Right lobe of liver (tissue), 6 donors: ENCODE measurements at regions of chr5 and their contacts with region 1.

Region 1: DNA sequence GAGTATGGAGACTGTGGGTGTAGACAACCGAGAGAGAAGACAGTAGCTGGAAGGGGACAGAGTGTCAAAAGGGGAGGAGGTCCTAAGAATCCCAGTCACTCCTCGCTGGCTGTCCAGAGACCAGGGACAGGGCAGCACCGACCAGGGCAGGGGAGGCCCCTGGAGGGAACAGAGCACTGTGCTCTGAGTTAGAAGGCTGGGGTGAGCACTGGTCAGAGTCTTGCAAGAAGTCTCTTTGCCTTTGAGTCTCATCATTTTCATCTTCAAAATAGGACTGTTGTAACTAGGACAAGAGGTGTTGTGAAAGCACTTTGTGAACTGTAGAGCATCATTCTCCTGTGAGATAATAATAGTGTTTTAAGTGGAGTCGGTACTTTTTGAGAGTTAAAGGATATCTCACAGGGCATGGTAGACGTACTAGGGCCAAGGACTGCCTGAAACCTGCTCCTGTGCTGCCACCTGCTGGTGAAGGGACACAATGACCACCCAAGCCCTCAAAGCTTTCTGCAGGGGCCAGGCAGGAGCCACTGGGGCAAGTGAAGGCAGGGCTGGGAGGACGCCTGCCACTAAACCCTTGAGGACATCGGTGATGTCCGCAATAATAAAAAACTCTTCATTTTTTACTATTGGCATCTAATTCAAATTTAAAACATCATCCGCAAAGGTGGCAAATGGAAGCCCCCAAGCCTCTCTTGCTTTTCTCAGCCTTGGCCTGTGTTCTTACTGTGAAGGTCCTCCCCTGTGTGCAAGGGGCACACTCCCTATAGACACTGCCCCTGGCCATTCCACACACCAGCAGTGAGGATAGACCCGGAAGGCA is 28.2 kb downstream of the SLC6A7 start:
- DNase-seq: peak; percentile 82 to 86 (median 83)
- ATAC-seq: peak; percentile 91 to 99 (median 98)
- H3K4me3 ChIP-seq: no peak overlapping the region
- H3K27ac ChIP-seq: no peak overlapping the region
- H3K4me1 ChIP-seq: no peaks in the 10 kb centered on the region
- H3K27me3 ChIP-seq: no peaks in the 10 kb centered on the region
- CTCF ChIP-seq: peak; percentile 87 to 94 (median 92)
- POLR2A ChIP-seq: no peak

Region 2: GRCh38 chr5:150129813-150130492 is 88.1 kb before region 1 on chr5:
- intact Hi-C with region 1: loop called in 1 of 2 experiments (anchors 10 kb)
- DNase-seq: peak; percentile 76 to 87 (median 86)
- ATAC-seq: peak; percentile 94 to 95 (median 94)
- H3K4me3 ChIP-seq: peak overlapping the region in 2 of 3 donors; percentile 33 to 37
- H3K27ac ChIP-seq: peak overlapping the region in 2 of 3 donors; percentile 41 to 57
- H3K4me1 ChIP-seq: peaks cover 0 to 17% (median 6%) of the 10 kb centered on the region in 4 donors
- H3K27me3 ChIP-seq: no peaks in the 10 kb centered on the region
- CTCF ChIP-seq: peak; percentile 91 to 99 (median 98)
- POLR2A ChIP-seq: no peak

Region 3: DNA sequence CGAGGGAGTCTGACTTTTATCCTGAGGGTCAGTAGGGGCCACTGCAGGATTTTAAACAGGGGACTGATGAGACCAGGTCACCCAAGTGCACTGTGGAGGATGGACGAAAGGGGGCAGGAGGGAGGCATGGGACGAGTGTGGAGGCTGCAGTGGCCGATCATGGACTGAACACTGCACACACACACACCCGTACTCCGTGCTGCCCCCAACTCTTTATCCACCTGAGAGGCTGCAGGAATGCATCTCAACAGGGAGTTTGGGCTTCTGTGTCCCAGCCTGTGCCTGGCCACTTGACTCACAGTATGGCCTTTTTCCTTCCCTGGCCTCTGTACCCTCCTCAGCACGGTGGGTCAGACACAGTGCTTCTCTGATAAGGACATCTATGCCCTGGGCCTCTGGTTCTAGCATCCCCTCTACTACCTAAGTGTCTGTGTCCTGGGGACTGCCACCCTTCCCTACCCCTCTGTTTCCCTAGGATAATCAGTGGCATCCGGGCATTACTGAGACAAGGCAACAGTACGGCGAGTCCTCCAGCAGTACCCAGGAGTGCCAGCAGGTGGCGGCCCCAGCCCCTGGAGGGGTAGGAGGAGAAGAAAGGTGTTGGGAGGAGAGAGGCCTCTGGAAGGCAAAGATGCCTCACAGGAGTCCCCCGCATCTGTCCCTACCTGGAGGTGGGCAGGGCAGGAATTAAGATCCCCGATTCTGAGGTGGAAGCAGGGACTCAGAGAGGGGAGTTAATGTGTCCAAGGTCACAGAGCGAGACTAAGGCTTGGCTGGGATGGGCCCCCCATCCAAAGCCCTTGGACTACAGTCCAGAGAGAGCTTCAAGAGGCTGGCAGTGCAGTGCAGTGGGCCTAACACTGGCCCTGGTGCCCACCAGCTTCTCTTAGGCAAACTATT is 56.6 kb before region 1 on chr5:
- intact Hi-C with region 1: loop called (anchors 5 kb)
- DNase-seq: peak; percentile 77 to 86 (median 83)
- ATAC-seq: peak; percentile 91 to 95 (median 94)
- H3K4me3 ChIP-seq: no peak overlapping the region
- H3K27ac ChIP-seq: no peak overlapping the region
- H3K4me1 ChIP-seq: no peaks in the 10 kb centered on the region
- H3K27me3 ChIP-seq: no peaks in the 10 kb centered on the region
- CTCF ChIP-seq: peak; percentile 82 to 93 (median 86)
- POLR2A ChIP-seq: no peak